ENCODE measurements at regions of chr1 and their contacts with region 1.

Region 1: GRCh38 chr1:77579547-77579946 is 102.9 kb downstream of the ZZZ3 start:
- DNase-seq: no peak
- ATAC-seq: no peak

Region 2: DNA sequence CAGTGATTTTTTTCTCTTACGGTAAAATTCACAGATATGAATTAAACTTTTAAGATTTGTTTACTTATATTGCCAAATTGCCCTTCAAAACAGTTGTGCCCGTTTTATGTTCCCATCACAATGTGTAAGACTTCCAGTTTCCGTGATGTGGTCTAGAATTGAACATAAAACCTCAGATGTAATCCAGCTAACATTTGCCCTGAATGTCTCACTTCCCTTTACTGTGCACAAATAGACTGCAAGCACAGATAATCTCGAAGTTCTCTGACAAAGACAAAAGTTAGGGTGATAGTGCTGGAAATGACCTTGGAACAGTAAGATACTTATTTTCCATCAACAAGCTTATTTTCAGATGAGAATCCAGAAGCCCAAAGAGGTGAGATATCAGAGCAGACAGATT is 74.6 kb before region 1 on chr1:
- intact Hi-C with region 1: no loop called
- DNase-seq: no peak
- ATAC-seq: no peak

Region 3: GRCh38 chr1:77514921-77515776 is 64.4 kb before region 1 on chr1:
- intact Hi-C with region 1: no loop called
- DNase-seq: peak; percentile 63
- ATAC-seq: peak; percentile 97

Region 4: GRCh38 chr1:77639056-77639455 is 59.5 kb after region 1 on chr1:
- intact Hi-C with region 1: loop called (anchors 10 kb)
- DNase-seq: no peak
- ATAC-seq: no peak

Measured in left ventricle myocardium superior (tissue), 1 donor.